ENCODE measurements at regions of chr1 and their contacts with region 1.

Region 1: DNA sequence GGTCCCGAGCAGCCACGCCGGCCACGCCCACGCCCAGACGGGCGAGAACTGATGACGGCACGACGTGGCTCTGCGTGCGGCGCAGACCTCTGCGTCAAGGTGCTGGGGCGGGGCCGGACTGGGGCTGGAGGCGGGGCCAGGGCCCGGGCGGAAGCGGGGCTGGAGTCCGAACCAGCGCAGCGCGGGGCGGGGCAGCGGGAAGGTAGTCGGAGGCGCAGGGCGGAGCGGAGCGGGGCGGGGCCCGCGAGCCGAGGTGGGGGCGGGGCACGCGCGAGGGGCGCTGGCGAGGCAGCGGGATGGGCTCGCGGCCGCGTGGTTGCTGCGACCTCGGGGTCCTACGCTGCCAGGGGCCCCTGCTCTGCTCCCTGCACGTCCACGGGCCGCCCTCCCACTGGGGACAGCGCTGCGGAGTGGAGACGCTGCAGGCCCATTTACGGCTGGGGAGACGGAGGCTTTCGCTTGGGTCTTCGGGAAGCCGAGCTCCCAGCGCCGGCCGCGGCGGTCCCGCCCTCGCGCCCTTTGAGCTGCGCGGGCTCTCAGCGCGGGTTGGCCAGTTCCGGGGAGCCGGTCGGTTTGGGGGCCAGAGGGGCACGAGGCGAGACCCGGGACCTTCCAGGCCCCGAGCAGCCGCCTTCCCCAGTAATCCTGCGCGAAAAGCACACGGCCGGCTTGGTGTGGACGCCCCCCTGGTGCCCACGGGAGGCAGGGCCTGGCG is at the start of gene PEX10:
- DNase-seq: peak; percentile 99
- H3K4me3 Mint-ChIP-seq: peak within 1 kb of the TSS; percentile 90
- H3K27ac Mint-ChIP-seq: peak within 1 kb of the TSS; percentile 89
- H3K4me1 Mint-ChIP-seq: peaks cover 38% of the 10 kb centered on the region
- H3K27me3 Mint-ChIP-seq: no peaks in the 10 kb centered on the region
- total RNA-seq, gene PEX10: 22.4 and 24.0 TPM in 2 replicates

Region 2: GRCh38 chr1:2391041-2391930 is 21.4 kb before region 1 on chr1 and contains the starts of genes MORN1 and RER1:
- intact Hi-C with region 1: loop called (anchors 1 kb)
- DNase-seq: peak; percentile 99
- H3K4me3 Mint-ChIP-seq: peak within 1 kb of the TSS; percentile 88
- H3K27ac Mint-ChIP-seq: peak within 1 kb of the TSS; percentile 82
- H3K4me1 Mint-ChIP-seq: peaks cover 28% of the 10 kb centered on the region
- H3K27me3 Mint-ChIP-seq: no peaks in the 10 kb centered on the region
- total RNA-seq, gene MORN1: 8.4 and 8.6 TPM in 2 replicates
- total RNA-seq, gene RER1: 161 and 177 TPM in 2 replicates

Region 3: DNA sequence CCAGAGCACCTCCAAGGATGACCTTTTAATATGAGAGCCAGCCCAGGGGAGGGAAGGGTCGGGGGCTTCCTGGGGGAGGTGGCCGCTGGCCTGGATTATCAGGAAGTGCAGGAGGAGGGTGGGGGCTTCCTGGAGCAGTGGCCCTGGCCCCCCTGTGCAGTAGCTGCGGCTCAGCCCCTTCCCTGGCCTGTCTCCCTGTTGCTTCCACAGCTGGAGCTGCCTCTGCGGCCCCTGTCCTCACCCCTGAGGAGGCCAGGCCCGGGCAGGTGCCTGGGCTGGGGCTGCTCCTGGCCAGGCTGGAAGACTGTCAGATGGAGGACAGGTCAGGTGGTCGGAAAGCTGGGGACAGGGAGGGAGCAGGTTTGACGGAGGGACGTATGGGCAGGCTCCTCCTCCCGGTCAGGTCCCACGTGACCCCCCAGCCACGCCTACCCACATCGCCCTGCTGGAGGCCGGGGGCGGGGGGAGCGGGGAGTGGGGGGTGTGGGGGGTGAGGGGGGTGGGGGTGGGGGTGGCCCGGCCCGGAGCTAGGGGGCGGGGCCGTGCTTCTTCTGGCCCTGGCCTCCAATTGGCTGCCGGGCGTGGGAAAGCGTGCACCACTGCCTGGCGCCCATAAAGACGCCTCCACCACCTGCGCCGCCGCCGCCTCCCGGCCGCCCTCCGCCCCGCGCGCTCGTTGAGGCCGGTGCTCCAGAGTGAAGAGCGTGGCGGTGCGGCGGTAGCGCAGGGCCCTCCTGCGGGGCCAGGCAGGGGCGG is 133.3 kb after region 1 on chr1:
- intact Hi-C with region 1: loop called (anchors 1 kb)
- DNase-seq: peak; percentile 87
- H3K4me3 Mint-ChIP-seq: peak overlapping the region; percentile 91
- H3K27ac Mint-ChIP-seq: peak overlapping the region; percentile 61
- H3K4me1 Mint-ChIP-seq: peaks cover 7% of the 10 kb centered on the region
- H3K27me3 Mint-ChIP-seq: peaks cover 13% of the 10 kb centered on the region

Region 4: DNA sequence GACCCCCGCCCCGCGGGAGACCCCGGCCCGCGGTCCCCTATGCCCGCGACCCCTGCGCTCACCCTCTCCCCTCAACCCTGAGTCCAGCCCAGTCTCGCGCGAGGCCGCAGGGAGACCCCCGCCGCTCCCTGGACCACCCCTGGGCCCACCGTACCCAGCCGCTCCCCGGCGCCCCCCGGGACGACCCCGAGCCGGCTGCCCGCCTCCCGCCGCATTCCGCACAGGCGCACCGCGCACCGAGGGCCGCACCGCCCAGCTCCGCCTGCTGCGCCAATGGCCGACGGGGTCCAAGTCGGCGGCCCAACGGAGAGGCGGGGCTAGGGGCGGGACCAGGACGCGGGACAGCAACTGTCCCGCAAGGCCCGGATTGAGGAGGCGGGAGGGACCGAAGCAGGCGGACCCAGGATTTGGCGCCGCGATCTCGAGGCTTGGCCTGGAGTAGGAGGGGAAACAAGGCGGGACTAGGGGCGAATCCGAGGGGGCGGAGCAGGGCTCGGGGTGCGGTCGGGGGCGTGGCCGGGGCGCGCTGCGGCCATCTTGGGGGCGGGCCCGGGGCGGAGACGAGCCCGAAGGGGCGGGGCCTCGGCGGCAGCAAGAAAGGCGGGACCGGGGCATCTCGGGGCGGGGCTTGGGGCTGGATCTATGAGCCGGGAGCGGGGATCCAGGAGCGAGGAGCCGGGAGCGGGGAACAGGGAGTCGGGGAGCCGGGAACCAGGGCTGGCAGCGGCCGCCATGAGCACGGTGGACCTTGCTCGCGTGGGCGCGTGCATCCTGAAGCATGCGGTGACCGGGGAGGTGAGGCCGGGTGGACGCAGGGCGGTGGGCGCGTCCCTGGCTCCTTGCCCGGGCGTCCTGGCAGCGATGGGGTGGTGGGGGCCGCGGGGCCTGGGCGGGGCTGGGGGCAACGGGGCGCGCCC is 173.7 kb after region 1 on chr1 and contains the start of gene PRXL2B:
- intact Hi-C with region 1: loop called (anchors 1 kb)
- DNase-seq: peak; percentile 98
- H3K4me3 Mint-ChIP-seq: peak within 1 kb of the TSS; percentile 86
- H3K27ac Mint-ChIP-seq: peak within 1 kb of the TSS; percentile 94
- H3K4me1 Mint-ChIP-seq: peaks cover 40% of the 10 kb centered on the region
- H3K27me3 Mint-ChIP-seq: no peaks in the 10 kb centered on the region
- total RNA-seq, gene PRXL2B: 39.5 and 42.1 TPM in 2 replicates

Region 5: DNA sequence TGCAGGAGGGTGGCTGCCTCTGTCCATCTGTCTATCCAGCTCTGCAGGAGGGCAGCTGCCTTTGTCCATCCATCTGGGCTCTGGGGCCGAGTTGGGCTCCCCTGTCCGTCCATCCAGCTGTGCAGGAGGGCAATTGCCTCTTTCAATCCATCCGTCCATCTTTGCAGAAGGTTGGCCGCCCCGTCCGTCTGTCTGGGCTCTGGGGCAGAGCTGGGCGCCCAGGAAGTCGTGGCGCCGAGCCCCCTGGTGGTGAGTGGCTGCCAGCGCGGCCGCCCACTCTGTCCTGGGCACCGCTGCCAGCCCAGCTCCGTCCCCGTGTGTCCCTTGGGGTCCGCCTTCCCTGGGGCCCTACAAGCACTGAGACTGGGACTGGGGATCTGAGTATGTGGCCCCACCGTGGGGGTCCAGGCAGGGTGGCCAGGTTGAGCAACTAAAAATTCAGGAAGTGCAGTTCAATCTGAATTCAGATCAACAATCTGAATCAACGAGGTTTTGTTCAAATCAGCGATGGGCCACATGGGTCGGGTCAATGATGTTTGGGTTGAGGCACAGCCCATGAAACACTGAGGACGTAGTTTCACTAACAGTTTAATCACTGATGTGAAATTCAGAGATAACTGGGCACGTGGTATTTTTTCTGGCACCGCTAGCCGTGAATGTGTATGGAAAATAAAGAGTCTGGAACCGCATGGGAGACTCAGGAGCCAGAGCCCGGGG is 509.5 kb after region 1 on chr1:
- intact Hi-C with region 1: loop called (anchors 2 kb)
- DNase-seq: peak; percentile 5
- H3K4me3 Mint-ChIP-seq: no peak overlapping the region
- H3K27ac Mint-ChIP-seq: no peak overlapping the region
- H3K4me1 Mint-ChIP-seq: no peaks in the 10 kb centered on the region
- H3K27me3 Mint-ChIP-seq: no peaks in the 10 kb centered on the region

Region 6: GRCh38 chr1:3746830-3747521 is 1334.3 kb after region 1 on chr1:
- intact Hi-C with region 1: loop called (anchors 5 kb)
- DNase-seq: peak; percentile 86
- H3K4me3 Mint-ChIP-seq: peak overlapping the region; percentile 84
- H3K27ac Mint-ChIP-seq: no peak overlapping the region
- H3K4me1 Mint-ChIP-seq: peaks cover 31% of the 10 kb centered on the region
- H3K27me3 Mint-ChIP-seq: peaks cover 2% of the 10 kb centered on the region

Region 7: GRCh38 chr1:4101459-4102161 is 1688.9 kb after region 1 on chr1:
- intact Hi-C with region 1: no loop called
- DNase-seq: no peak
- H3K4me3 Mint-ChIP-seq: no peak overlapping the region
- H3K27ac Mint-ChIP-seq: no peak overlapping the region
- H3K4me1 Mint-ChIP-seq: no peaks in the 10 kb centered on the region
- H3K27me3 Mint-ChIP-seq: no peaks in the 10 kb centered on the region

Measured in activated T-helper 1 cell treated with anti-CD3 and anti-CD28 coated beads, Interleukin-12 subunit alpha, Interleukin-12 subunit beta, Interleukin-2, Interleukin-4 antibody, amounts not matched to agents 30 ng/mL and 10 ng/mL and 1 ng/mL, durations not matched to agents 14 hours and 24 hours and 36 hours (primary cell).